Left cardiac atrium (tissue), 4 donors: ENCODE measurements at regions of chr2 and their contacts with region 1.

Region 1: GRCh38 chr2:112726497-112727190 is 5.8 kb downstream of the NT5DC4 start:
- DNase-seq: peak; percentile 91
- ATAC-seq: peak; percentile 93

Region 2: DNA sequence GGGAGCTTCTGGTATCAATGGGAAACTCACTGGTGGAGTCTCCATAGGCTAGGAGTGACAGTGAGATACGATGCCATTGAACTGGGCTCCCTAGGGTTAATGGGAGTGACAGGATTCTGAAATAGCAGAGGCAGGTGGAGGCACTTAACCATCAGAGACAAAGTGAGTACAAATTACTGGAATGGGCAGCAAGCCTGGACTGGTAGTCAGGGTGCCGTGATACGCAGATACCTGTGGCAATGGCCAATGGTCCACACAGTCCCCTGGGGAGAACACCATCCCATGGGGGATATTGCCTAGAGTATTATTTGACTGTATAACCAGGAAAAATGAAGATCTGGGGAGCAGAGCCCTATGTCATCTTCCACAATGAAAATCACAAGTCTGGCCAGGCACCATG is 124.9 kb before region 1 on chr2:
- intact Hi-C with region 1: loop called (anchors 5 kb)
- DNase-seq: no peak
- ATAC-seq: no peak

Region 3: GRCh38 chr2:112626604-112627059 is 100.0 kb before region 1 on chr2:
- intact Hi-C with region 1: loop called (anchors 1 to 2 kb)
- DNase-seq: peak; percentile 72
- ATAC-seq: peak; percentile 65 to 76

Region 4: DNA sequence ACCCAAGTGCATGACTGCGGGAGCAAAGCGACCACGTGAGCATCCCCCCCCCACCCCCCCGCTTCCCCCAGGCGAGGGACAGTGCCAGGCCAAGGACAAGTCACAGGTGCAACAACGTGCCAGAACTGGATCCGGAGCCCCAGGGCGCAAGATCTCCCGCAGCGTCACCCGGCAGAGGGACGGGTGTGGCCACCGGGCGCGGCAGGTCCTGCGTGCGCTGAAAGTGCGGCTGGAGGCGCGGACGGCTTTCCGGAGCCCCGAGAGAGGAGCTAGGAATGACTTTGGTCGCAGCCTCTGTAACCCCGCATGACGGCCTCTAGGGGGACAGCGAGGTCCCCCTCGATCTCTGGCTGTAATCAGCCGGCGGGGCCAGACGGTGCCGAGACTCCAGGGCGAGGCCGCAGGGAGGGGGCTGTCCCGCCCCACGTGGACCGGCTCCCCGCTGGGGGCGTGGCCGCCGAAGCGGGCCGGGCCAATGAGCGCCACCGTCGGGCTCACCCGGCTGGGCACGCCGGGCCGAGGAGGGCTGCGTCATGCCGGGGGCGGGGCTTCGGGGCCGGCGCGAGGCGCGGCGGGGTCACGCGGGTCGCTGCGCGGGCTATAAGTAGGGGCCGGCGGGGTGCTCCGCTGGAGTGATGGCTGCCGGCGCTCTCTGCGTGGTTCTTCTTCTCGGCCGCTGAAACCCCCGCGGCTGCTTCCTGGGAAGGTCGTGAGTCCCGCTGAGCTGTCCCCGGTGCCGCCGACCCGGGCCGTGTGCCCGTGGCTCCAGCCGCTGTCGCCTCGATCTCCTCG is 81.1 kb before region 1 on chr2 and contains the start of gene SLC20A1:
- intact Hi-C with region 1: loop called in 1 of 2 experiments (anchors 5 kb)
- DNase-seq: peak; percentile 97
- ATAC-seq: peak; percentile 96 to 97
- total RNA-seq, gene SLC20A1: 15.1 to 38.1 TPM